SK-N-SH (cell line): ENCODE measurements at regions of chr4 and their contacts with region 1.

Region 1: DNA sequence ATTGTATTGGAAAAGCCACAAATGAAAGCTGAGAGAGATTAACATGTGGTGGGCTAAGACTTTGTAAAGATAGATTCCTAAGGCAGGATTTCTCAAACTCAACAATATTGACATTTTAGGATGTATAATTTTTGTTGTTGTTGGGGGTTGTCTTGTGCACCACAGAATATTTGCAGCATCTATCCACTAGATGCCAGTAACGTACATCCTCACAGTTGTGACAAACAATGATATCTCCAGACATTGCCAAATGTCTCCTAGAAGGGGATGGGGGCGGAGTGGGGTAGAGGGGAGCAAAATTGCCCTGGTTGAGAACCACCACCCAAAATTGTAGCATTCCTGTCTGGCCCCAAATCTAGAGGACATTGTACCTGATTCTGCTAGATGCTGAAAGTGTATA is 14.7 kb upstream of the CBR4 start:
- DNase-seq: peak; percentile 69
- H3K4me3 ChIP-seq: no peak overlapping the region
- H3K27ac ChIP-seq: no peak overlapping the region
- H3K4me1 ChIP-seq: no peaks in the 10 kb centered on the region; a peak in 1 of 4 replicates
- H3K27me3 ChIP-seq: no peaks in the 10 kb centered on the region
- CTCF ChIP-seq: peak; percentile 72
- EP300 ChIP-seq: no peak
- RAD21 ChIP-seq: peak; percentile 91

Region 2: DNA sequence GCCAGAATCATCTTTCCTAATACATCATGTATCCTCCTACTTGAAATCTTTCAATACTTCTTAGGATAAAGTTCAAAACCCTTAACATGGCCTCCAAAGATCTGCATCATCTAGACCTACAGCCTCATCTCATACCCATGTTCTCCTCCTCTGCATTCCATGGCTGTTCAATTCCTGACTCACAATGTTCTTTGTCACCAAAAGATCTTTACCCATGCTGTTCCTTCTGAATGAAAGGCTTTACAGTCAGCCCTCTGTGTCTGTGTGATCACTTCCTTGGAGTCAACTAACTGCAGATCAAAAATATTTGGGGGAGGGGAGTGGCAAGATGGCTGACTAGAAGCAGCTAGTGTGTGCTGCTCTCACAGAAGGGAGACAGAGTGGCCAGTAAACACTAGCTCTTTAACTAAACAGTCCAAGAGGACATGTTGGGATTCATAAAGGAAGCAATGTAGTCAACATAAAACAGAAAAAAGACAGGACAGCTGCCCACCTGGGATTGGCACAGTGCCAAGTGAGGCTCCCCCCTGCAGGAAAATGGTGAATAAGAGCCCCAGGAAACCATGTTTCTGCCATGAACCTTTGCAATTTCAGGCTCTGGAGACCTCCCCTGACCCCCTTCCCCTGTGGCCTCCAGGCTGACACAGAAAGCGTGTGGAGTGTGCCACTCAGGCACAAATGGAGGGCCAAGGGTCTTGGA is 46.6 kb before region 1 on chr4:
- CTCF ChIA-PET with region 1: no interaction called
- POLR2A ChIA-PET with region 1: no interaction called
- DNase-seq: no peak
- H3K4me3 ChIP-seq: no peak overlapping the region; a peak in 1 of 4 replicates
- H3K27ac ChIP-seq: no peak overlapping the region
- H3K4me1 ChIP-seq: no peaks in the 10 kb centered on the region
- H3K27me3 ChIP-seq: no peaks in the 10 kb centered on the region
- CTCF ChIP-seq: no peak
- EP300 ChIP-seq: no peak
- RAD21 ChIP-seq: no peak

Region 3: GRCh38 chr4:169485791-169486742 is 461.3 kb after region 1 on chr4:
- CTCF ChIA-PET with region 1: interaction called, 26 read pairs
- POLR2A ChIA-PET with region 1: no interaction called
- DNase-seq: peak; percentile 43
- H3K4me3 ChIP-seq: no peak overlapping the region
- H3K27ac ChIP-seq: peak overlapping the region in 1 of 2 experiments; percentile 39; a peak in 1 of 4 replicates
- H3K4me1 ChIP-seq: 0 out of 4 replicates have a peak, but pooled peaks cover 0 to 3% of the 10 kb centered on the region in 2 experiments
- H3K27me3 ChIP-seq: no peaks in the 10 kb centered on the region
- CTCF ChIP-seq: peak; percentile 76
- EP300 ChIP-seq: no peak
- RAD21 ChIP-seq: peak; percentile 95